ENCODE measurements at regions of chr6 and their contacts with region 1.

Region 1: GRCh38 chr6:107982486-107982885 is 24.5 kb upstream of the SEC63 start:
- DNase-seq: no peak
- ATAC-seq: no peak

Region 2: GRCh38 chr6:108052706-108053105 is 70.2 kb after region 1 on chr6:
- intact Hi-C with region 1: loop called in 1 of 2 experiments (anchors 5 kb)
- DNase-seq: no peak
- ATAC-seq: no peak

Region 3: GRCh38 chr6:108068618-108069017 is 86.1 kb after region 1 on chr6:
- intact Hi-C with region 1: no loop called
- DNase-seq: no peak
- ATAC-seq: peak; percentile 74

Region 4: GRCh38 chr6:108157234-108157980 is 174.9 kb after region 1 on chr6:
- intact Hi-C with region 1: no loop called
- DNase-seq: no peak
- ATAC-seq: peak; percentile 30

Measured in left colon (tissue), 2 donors.